Astrocyte of the cerebellum (primary cell): ENCODE measurements at regions of chr12 and their contacts with region 1.

Region 1: DNA sequence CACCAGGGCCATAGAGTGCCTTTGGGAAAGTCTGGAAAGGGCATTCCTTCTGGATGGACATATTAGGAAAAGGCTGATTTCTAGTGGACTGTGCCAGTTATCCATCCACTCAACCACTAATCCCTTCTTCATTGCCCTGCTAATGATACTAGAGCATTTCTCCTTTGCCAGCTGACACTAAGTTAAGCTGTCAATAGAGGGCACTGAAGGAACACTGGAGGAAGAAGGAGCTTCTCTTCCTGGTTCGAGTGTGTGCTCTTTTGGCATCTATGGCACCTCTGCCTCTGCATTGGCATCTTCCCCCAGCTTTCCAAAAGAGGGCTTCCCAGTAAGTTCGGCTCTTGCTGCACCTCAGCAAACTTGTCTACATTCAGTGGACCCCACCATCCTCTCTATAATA is 165.4 kb downstream of the DERA start:
- DNase-seq: no peak
- H3K4me3 ChIP-seq: no peak overlapping the region
- CTCF ChIP-seq: peak; percentile 37

Region 2: GRCh38 chr12:16121953-16122352 is 45.4 kb after region 1 on chr12:
- in situ Hi-C with region 1: loop called (anchors 5 kb)
- DNase-seq: no peak
- H3K4me3 ChIP-seq: no peak overlapping the region
- CTCF ChIP-seq: no peak